ENCODE measurements at regions of chr11 and their contacts with region 1.

Region 1: GRCh38 chr11:120335908-120336640 is at the start of gene ARHGEF12:
- DNase-seq: peak; percentile 97
- ATAC-seq: peak; percentile 54
- H3K4me3 ChIP-seq: peak within 1 kb of the TSS; percentile 85
- H3K27ac ChIP-seq: peak within 1 kb of the TSS; percentile 38
- H3K4me1 ChIP-seq: peaks cover 60% of the 10 kb centered on the region
- H3K27me3 ChIP-seq: no peaks in the 10 kb centered on the region
- CTCF ChIP-seq: peak; percentile 83
- total RNA-seq, gene ARHGEF12: 41.0 and 54.4 TPM in 2 replicates

Region 2: GRCh38 chr11:120385110-120385509 is 49.0 kb after region 1 on chr11:
- CTCF ChIA-PET with region 1: no interaction called
- POLR2A ChIA-PET with region 1: no interaction called
- intact Hi-C with region 1: loop called (anchors 5 kb)
- DNase-seq: no peak
- ATAC-seq: no peak
- H3K4me3 ChIP-seq: no peak overlapping the region
- H3K27ac ChIP-seq: no peak overlapping the region
- H3K4me1 ChIP-seq: peaks cover 40% of the 10 kb centered on the region
- H3K27me3 ChIP-seq: no peaks in the 10 kb centered on the region
- CTCF ChIP-seq: no peak

Region 3: DNA sequence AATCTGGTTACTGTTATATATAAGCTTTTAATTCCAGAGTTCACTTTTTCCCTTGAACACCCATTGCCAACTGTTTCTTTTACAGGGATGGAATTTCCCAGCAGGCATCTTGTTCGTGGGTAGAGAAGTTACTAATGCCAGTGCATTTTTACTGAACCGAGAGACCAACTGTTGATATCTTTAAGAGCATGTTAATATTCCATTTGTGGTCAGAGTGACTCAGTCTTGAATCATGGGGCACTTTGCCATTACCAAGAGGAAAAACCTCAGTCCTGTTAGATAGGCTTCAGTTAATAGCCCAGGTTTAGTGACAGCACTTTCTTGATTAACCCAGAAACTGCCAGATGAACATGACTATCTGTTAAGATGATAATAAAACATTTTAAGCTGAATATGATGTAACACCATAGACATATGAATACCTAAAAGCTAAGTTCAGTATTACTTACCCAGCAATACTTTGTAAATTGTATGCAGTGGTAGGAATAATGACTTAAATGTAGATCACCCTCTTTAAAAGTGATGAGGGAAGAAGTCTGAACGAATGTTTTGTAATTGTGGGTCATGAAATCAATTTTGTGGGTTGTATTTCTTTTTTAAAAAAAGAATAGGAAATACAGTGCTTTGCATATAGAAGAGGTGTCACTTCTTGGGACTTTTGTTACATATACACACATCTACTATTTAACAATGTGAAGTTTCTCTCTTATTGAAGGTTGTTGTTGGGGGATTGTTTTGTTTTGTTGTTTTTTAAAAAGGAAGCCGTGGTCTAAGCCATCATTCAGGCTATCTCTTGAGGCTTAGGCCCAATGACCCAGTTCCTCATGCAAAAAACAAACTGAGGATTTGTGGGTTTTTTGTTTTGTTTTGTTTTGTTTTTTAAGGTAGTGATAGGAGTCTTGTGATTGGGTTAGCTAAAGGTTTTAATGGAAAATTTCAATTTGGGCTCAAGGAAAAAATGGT is 96.3 kb after region 1 on chr11:
- CTCF ChIA-PET with region 1: no interaction called
- POLR2A ChIA-PET with region 1: interaction called, 8 read pairs
- intact Hi-C with region 1: loop called (anchors 1 kb)
- DNase-seq: peak; percentile 100
- ATAC-seq: peak; percentile 94
- H3K4me3 ChIP-seq: peak overlapping the region; percentile 39
- H3K27ac ChIP-seq: peak overlapping the region; percentile 74
- H3K4me1 ChIP-seq: peaks cover 18% of the 10 kb centered on the region
- H3K27me3 ChIP-seq: no peaks in the 10 kb centered on the region
- CTCF ChIP-seq: no peak

Region 4: GRCh38 chr11:120500414-120501071 is 164.5 kb after region 1 on chr11:
- CTCF ChIA-PET with region 1: interaction called, 3 read pairs
- POLR2A ChIA-PET with region 1: no interaction called
- intact Hi-C with region 1: loop called (anchors 2 kb)
- DNase-seq: peak; percentile 32
- ATAC-seq: peak; percentile 48
- H3K4me3 ChIP-seq: no peak overlapping the region
- H3K27ac ChIP-seq: no peak overlapping the region
- H3K4me1 ChIP-seq: no peaks in the 10 kb centered on the region
- H3K27me3 ChIP-seq: peaks cover 32% of the 10 kb centered on the region
- CTCF ChIP-seq: peak; percentile 22; the same call in 1 of the 2 replicates

Measured in PC-3 (cell line).